ENCODE measurements at regions of chr22 and their contacts with region 1.

Region 1: DNA sequence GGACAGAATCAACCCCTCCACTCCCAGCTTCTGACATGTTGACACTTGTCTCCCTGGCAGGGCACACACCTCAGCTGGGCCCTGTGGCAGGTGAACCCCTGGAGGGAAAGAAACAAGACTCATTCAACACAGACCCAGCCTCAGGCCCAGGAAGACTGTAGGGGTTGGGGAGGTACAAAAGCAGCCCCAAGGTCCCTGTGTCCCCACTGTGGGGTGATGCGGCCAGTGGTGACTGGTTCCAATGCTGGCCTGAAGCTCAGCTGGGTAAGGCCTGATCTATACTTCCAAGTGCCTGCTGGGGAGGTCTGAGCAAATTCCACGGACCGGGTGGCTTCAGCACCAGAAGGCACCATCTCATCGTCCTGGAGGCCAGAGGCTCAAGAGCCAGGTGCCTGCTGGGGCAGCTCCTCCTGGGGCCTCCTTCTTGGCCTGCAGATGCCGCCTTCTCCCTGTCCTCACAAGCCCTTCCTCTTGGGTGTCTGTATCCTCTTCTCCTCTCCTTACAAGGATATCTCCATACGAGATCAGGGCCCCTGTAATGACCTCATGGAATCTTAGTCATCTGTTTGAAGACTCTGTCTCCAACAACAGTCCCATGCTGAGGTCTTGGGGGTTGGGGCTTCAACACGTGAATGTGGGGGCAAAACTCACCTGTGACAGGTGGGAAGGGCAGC is 1492.1 kb downstream of the BRD1 start:
- DNase-seq: no peak
- ATAC-seq: no peak
- H3K4me3 ChIP-seq: no peak overlapping the region
- H3K27ac ChIP-seq: no peak overlapping the region
- H3K4me1 ChIP-seq: no peaks in the 10 kb centered on the region
- H3K27me3 ChIP-seq: peaks cover 3% of the 10 kb centered on the region; the same call in 1 of the 2 replicates
- CTCF ChIP-seq: no peak

Region 2: GRCh38 chr22:48268771-48269552 is 66.6 kb before region 1 on chr22:
- CTCF ChIA-PET with region 1: no interaction called
- POLR2A ChIA-PET with region 1: interaction called, 12 read pairs
- in situ Hi-C with region 1: no loop called
- intact Hi-C with region 1: no loop called
- DNase-seq: no peak
- ATAC-seq: no peak
- H3K4me3 ChIP-seq: no peak overlapping the region
- H3K27ac ChIP-seq: no peak overlapping the region
- H3K4me1 ChIP-seq: no peaks in the 10 kb centered on the region
- H3K27me3 ChIP-seq: no peaks in the 10 kb centered on the region; the same call in 1 of the 2 replicates
- CTCF ChIP-seq: no peak

Region 3: DNA sequence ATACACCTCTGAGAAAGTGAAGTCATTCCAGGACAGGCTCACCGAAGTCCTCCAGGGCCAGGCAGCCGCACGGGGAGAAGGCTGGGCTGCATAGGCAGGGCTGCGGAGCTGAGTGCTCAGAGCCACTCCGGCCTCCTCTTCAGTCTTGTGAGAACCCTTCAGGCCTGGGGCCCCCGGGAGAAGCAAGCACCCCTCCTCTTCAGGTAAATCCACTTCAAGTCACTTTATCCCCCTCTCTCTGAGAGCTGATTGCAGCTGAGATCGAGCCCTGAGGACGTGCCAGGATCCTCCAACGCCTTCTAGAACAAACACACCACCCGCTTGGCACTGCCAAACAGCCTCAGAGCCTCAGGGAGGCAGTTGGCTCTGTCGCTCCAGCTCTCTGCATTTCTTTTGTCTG is 34.2 kb before region 1 on chr22:
- CTCF ChIA-PET with region 1: no interaction called
- POLR2A ChIA-PET with region 1: no interaction called
- in situ Hi-C with region 1: no loop called
- intact Hi-C with region 1: no loop called
- DNase-seq: no peak
- ATAC-seq: no peak
- H3K4me3 ChIP-seq: no peak overlapping the region
- H3K27ac ChIP-seq: no peak overlapping the region
- H3K4me1 ChIP-seq: no peaks in the 10 kb centered on the region
- H3K27me3 ChIP-seq: no peaks in the 10 kb centered on the region; the same call in 1 of the 2 replicates
- CTCF ChIP-seq: no peak

Region 4: DNA sequence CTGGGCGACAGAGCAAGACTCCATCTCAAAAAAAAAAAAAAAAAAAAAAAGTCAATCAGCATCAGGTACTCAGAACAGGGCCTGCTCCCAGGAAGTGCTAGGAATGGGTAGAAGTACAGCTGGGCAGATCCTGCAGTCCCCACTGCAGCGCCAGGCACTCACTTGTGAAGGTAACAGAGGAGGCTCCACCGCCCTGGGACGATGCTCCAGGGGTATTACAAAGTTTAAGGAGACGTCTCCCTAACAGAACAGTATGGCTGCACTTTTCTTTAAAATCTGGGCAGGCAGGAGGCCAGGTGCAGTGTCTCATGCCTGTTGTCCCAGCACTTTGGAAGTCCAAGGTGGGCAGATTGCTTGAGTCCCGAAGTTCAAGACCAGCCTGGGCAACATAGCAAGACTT is 43.1 kb after region 1 on chr22:
- CTCF ChIA-PET with region 1: no interaction called
- POLR2A ChIA-PET with region 1: interaction called, 13 read pairs
- in situ Hi-C with region 1: no loop called
- intact Hi-C with region 1: no loop called
- DNase-seq: no peak
- ATAC-seq: no peak
- H3K4me3 ChIP-seq: no peak overlapping the region
- H3K27ac ChIP-seq: no peak overlapping the region
- H3K4me1 ChIP-seq: no peaks in the 10 kb centered on the region
- H3K27me3 ChIP-seq: no peaks in the 10 kb centered on the region; the same call in 1 of the 2 replicates
- CTCF ChIP-seq: no peak

Region 5: DNA sequence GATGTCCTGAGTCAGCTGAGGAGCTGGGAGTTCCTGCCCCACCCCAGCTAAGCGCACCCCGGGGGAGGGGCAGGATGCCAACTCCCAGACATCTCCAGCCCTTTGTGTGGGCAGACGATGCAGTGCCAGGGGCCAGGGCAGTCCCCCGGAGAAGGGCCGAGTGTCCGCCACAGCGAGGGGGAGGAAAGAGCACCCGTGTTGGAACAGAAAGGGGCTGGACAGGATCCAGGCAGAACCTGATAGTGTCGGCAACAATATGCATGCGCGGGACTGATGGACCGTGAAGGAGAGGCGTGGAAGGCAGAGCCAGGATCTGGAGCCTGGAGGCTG is 57.4 kb after region 1 on chr22:
- CTCF ChIA-PET with region 1: no interaction called
- POLR2A ChIA-PET with region 1: no interaction called
- in situ Hi-C with region 1: no loop called
- intact Hi-C with region 1: no loop called
- DNase-seq: no peak
- ATAC-seq: no peak
- H3K4me3 ChIP-seq: no peak overlapping the region
- H3K27ac ChIP-seq: no peak overlapping the region
- H3K4me1 ChIP-seq: no peaks in the 10 kb centered on the region
- H3K27me3 ChIP-seq: no peaks in the 10 kb centered on the region
- CTCF ChIP-seq: no peak

Measured in Panc1 (cell line).